Activated T-helper 2 cell treated with anti-CD3 and anti-CD28 coated beads, Interferon-gamma antibody, Interleukin-2, Interleukin-4, amounts not matched to agents 10 μg/mL and 5 μg/mL and 100 μg/mL, durations not matched to agents 14 hours and 24 hours and 36 hours (primary cell): ENCODE measurements at regions of chr5 and their contacts with region 1.

Region 1: DNA sequence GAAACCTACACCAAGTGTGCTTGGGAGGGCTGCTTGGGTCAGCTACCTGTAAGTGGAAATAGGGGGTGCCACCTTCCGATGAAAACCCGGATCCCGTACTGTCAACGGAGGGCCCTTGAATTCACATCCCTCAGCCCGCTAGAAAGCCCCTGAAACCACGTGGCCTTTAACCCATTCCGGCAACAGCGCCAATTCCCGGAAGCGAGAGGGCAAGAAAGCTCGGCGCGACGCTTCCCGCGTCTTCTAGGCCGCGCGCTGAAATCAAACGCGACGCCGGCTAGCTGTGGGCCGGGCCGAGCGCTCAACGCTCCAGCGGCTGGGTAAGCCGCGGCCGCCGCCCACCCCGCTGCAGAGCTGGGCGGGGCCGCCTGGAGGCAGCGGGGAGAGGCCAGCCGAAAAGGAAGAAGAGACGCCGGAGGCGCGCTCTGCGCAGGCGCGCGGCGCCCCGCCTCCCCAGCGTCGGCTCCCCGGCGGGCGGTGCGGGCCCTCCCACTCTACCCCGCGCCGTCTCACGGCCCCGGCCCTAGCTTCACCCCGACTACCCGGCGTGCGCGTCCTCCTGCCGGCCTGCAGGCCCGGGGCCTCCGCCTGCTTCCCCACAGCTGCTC is at the start of gene KIF2A:
- DNase-seq: peak; percentile 96
- H3K4me3 Mint-ChIP-seq: peak within 1 kb of the TSS; percentile 99
- H3K27ac Mint-ChIP-seq: peak within 1 kb of the TSS; percentile 97
- H3K4me1 Mint-ChIP-seq: peaks cover 48% of the 10 kb centered on the region
- H3K27me3 Mint-ChIP-seq: no peaks in the 10 kb centered on the region
- total RNA-seq, gene KIF2A: 285 and 294 TPM in 2 replicates

Region 2: GRCh38 chr5:61981886-61982285 is 323.9 kb before region 1 on chr5:
- intact Hi-C with region 1: no loop called
- DNase-seq: no peak
- H3K4me3 Mint-ChIP-seq: no peak overlapping the region
- H3K27ac Mint-ChIP-seq: no peak overlapping the region
- H3K4me1 Mint-ChIP-seq: no peaks in the 10 kb centered on the region
- H3K27me3 Mint-ChIP-seq: no peaks in the 10 kb centered on the region

Region 3: GRCh38 chr5:62231576-62231975 is 74.2 kb before region 1 on chr5:
- intact Hi-C with region 1: loop called (anchors 5 kb)
- DNase-seq: no peak
- H3K4me3 Mint-ChIP-seq: peak overlapping the region; percentile 9
- H3K27ac Mint-ChIP-seq: peak overlapping the region; percentile 62
- H3K4me1 Mint-ChIP-seq: peaks cover 66% of the 10 kb centered on the region
- H3K27me3 Mint-ChIP-seq: no peaks in the 10 kb centered on the region

Region 4: DNA sequence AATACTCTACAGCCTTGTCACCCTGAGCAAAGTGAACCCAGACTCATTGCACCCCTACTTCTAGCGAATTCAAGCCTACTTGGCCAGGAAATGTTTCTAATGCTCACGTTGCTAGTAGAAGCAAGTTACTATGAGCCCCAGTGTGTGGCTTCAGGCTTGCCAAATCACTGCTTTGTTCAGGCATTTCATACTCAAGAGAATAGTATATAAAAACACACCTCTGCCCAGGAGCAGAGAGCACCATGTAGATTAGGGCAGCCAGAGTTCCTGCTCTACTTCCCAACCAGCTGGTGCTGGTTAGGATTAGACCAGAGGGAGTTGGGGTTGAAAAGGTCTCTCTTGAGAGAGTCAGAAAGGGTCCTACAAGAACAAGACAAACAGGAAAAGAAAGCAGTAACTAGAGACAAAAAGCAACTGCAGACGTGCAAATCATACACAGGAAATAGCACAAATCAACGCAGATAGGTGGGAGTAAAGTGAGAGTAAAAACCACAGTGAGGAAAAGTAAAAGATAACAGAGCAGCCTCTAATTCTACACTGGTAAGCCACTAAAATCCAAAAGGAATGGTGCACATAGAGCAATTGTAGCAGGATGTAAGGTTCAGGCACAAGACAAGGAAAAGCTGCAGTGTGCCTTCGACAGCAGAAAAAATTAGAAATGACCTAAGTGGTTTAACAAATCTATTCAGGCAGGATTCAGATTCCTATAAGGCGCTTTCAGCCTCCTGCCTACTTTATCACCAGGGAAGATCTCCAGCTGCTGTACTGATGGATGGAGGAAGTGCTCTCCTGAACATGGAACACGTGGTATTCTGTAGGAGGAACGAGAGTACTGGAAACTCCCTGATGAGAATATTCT is 49.4 kb before region 1 on chr5:
- intact Hi-C with region 1: loop called (anchors 2 kb)
- DNase-seq: peak; percentile 14
- H3K4me3 Mint-ChIP-seq: peak overlapping the region; percentile 63
- H3K27ac Mint-ChIP-seq: peak overlapping the region; percentile 94
- H3K4me1 Mint-ChIP-seq: peaks cover 75% of the 10 kb centered on the region
- H3K27me3 Mint-ChIP-seq: no peaks in the 10 kb centered on the region

Region 5: GRCh38 chr5:62340392-62340791 is 34.6 kb after region 1 on chr5:
- intact Hi-C with region 1: loop called (anchors 1 kb)
- DNase-seq: no peak
- H3K4me3 Mint-ChIP-seq: no peak overlapping the region
- H3K27ac Mint-ChIP-seq: peak overlapping the region; percentile 17
- H3K4me1 Mint-ChIP-seq: peaks cover 57% of the 10 kb centered on the region
- H3K27me3 Mint-ChIP-seq: no peaks in the 10 kb centered on the region

Region 6: GRCh38 chr5:62354028-62354874 is 48.4 kb after region 1 on chr5:
- intact Hi-C with region 1: loop called (anchors 2 kb)
- DNase-seq: no peak
- H3K4me3 Mint-ChIP-seq: no peak overlapping the region
- H3K27ac Mint-ChIP-seq: no peak overlapping the region
- H3K4me1 Mint-ChIP-seq: peaks cover 17% of the 10 kb centered on the region
- H3K27me3 Mint-ChIP-seq: no peaks in the 10 kb centered on the region

Region 7: GRCh38 chr5:62403434-62404250 is 97.8 kb after region 1 on chr5 and contains the start of gene DIMT1:
- intact Hi-C with region 1: loop called (anchors 2 kb)
- DNase-seq: peak; percentile 92
- H3K4me3 Mint-ChIP-seq: peak within 1 kb of the TSS; percentile 94
- H3K27ac Mint-ChIP-seq: peak within 1 kb of the TSS; percentile 91
- H3K4me1 Mint-ChIP-seq: peaks cover 25% of the 10 kb centered on the region
- H3K27me3 Mint-ChIP-seq: no peaks in the 10 kb centered on the region
- total RNA-seq, gene DIMT1: 39.8 and 45.0 TPM in 2 replicates